ENCODE measurements at regions of chr18 and their contacts with region 1.

Region 1: GRCh38 chr18:74342416-74343043 is 26.9 kb downstream of the C18orf63 start:
- DNase-seq: no peak
- ATAC-seq: no peak

Region 2: GRCh38 chr18:74196220-74197119 is 146.1 kb before region 1 on chr18:
- intact Hi-C with region 1: loop called (anchors 1 kb)
- DNase-seq: no peak
- ATAC-seq: peak; percentile 61

Region 3: GRCh38 chr18:74242438-74243096 is 100.0 kb before region 1 on chr18:
- intact Hi-C with region 1: loop called (anchors 2 kb)
- DNase-seq: peak; percentile 68
- ATAC-seq: peak; percentile 91

Measured in Right ventricle myocardium inferior (tissue), 1 donor.